ENCODE measurements at regions of chr19 and their contacts with region 1.

Region 1: DNA sequence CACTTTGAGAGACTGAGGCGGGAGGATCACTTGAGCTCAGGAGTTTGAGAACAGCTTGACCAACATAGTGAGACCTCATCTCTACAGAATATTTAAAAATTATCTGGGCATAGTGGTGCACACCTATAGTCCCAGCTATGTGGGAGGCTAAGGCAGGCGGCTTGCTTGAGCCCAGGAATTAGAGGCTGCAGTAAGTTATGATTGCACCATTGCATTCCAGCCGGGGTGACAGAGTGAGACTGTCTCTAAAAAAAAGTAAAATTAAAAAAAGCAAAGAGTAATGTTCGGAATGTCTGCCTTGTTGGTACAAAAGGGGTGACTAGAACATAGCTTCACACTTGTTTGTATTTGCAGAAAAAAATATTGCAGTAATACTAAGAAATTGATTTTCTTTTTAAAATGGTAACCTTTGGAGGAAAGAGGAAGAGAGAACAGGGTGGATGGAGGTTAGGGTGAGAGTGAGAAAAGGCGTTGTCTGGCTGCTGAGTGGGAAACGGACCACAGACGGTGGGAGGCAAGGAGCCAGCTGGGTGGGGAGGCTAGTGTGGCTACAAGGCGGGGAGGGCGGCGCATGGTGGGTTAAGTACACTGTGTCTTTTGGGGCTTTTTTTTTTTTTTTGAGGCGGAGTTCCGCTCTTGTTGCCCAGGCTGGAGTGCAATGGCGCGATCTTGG is 10.2 kb downstream of the PPP1R14A start:
- DNase-seq: no peak
- H3K4me3 ChIP-seq: no peak overlapping the region
- H3K27ac ChIP-seq: no peak overlapping the region
- H3K27me3 ChIP-seq: no peaks in the 10 kb centered on the region
- CTCF ChIP-seq: no peak

Region 2: DNA sequence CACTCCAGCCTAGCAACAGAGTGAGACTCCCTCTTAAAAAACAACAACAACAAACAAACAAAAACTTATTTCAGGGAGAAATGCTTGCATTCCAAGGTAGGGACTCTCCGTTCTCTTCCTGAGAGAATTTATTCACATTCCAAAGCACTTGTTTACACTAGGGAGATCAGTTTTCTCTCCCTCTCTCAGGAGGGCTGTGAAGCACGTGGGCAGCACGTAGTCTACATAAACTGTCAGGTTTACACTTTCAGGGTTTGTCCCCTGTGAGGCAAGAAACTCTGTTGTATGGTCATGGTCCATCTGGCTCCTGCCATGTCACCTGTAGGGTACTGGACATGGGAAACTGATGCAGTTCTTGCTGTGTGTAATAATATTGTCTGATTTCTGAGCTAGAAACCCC is 371.2 kb before region 1 on chr19:
- CTCF ChIA-PET with region 1: no interaction called
- POLR2A ChIA-PET with region 1: no interaction called
- DNase-seq: peak; percentile 20
- H3K4me3 ChIP-seq: no peak overlapping the region
- H3K27ac ChIP-seq: no peak overlapping the region
- H3K27me3 ChIP-seq: no peaks in the 10 kb centered on the region
- CTCF ChIP-seq: no peak

Region 3: GRCh38 chr19:37906869-37907734 is 338.9 kb before region 1 on chr19 and contains the start of gene SIPA1L3:
- CTCF ChIA-PET with region 1: interaction called, 14 read pairs
- POLR2A ChIA-PET with region 1: no interaction called
- DNase-seq: peak; percentile 86
- H3K4me3 ChIP-seq: peak within 1 kb of the TSS; percentile 96
- H3K27ac ChIP-seq: peak within 1 kb of the TSS; percentile 65
- H3K27me3 ChIP-seq: no peaks in the 10 kb centered on the region
- CTCF ChIP-seq: no peak; the same call in 1 of the 2 replicates
- polyA plus RNA-seq, gene SIPA1L3: 4.9 and 9.4 TPM in 2 replicates

Region 4: GRCh38 chr19:38125238-38125637 is 120.7 kb before region 1 on chr19:
- CTCF ChIA-PET with region 1: no interaction called
- POLR2A ChIA-PET with region 1: no interaction called
- DNase-seq: no peak
- H3K4me3 ChIP-seq: no peak overlapping the region
- H3K27ac ChIP-seq: no peak overlapping the region
- H3K27me3 ChIP-seq: no peaks in the 10 kb centered on the region
- CTCF ChIP-seq: no peak

Region 5: DNA sequence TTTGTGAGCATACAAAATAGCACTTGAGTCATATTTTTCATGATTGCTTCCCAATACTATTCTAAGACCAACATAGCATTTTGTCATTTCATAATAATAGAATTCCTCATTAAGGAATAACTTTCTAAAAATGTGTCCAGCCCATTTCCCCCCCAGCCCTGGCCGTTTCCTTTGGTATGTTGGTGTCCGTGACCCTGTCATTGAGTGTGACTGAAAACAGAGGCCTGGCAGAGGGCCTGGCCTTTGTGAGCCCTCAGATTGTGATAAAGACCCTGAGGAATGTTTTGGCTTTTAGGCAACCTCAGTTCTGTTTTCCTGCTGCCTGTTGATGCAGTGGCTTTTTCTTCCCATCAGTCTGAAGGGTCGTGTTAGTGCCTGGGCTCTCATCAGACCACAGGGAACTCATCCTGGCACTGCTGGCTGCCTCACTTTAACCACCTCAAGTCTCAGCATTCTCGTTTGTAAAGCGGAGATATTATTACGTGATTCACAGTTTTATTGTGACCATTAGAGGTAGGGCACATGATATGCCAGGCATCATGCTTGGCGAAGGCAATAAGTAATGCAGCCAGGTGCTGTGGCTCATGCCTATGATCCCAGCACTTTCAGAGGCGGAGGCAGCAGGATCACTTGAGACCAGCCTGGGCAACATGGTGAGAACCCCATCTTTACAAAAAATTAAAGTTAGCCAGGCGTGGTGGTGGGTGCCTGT is 32.2 kb after region 1 on chr19:
- CTCF ChIA-PET with region 1: interaction called, 10 read pairs
- POLR2A ChIA-PET with region 1: no interaction called
- DNase-seq: no peak
- H3K4me3 ChIP-seq: no peak overlapping the region
- H3K27ac ChIP-seq: peak overlapping the region; percentile 39
- H3K27me3 ChIP-seq: no peaks in the 10 kb centered on the region
- CTCF ChIP-seq: no peak

Region 6: DNA sequence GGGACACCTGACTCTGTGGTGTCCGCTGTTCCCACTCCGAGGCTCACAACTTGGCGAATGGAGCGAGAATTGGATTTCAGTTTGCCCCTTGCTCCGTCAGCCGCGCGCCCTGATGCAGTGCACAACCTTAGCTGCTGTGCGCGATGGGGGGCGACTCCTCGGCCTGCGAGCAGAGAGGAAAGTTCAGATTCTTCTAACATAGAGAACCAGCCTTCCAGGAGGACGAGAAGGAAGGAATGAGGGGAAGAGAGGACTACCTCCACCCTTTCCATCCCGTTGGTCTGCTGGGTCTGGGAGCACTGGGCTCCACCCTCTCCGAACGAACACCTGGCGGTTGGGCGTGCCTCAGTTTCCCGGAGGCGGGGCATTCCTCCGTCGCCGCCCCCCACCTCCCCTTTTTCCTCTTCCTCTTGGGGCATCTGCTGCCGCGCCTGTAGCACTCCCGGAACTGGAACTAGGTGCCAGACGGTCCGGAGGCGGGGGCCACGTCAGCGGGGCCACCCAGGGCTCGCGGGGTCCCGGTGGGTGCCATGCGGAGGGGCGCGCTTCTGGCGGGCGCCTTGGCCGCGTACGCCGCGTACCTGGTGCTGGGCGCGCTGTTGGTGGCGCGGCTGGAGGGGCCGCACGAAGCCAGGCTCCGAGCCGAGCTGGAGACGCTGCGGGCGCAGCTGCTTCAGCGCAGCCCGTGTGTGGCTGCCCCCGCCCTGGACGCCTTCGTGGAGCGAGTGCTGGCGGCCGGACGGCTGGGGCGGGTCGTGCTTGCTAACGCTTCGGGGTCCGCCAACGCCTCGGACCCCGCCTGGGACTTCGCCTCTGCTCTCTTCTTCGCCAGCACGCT is 73.7 kb after region 1 on chr19 and contains the start of gene KCNK6:
- CTCF ChIA-PET with region 1: interaction called, 17 read pairs
- POLR2A ChIA-PET with region 1: no interaction called
- DNase-seq: no peak
- H3K4me3 ChIP-seq: peak within 1 kb of the TSS; percentile 68
- H3K27ac ChIP-seq: no peak within 1 kb of the TSS
- H3K27me3 ChIP-seq: no peaks in the 10 kb centered on the region
- CTCF ChIP-seq: no peak
- polyA plus RNA-seq, gene KCNK6: 2.6 and 2.8 TPM in 2 replicates

Region 7: GRCh38 chr19:38367770-38368169 is 121.8 kb after region 1 on chr19:
- CTCF ChIA-PET with region 1: no interaction called
- POLR2A ChIA-PET with region 1: no interaction called
- DNase-seq: no peak
- H3K4me3 ChIP-seq: no peak overlapping the region
- H3K27ac ChIP-seq: no peak overlapping the region
- H3K27me3 ChIP-seq: peaks cover 16% of the 10 kb centered on the region
- CTCF ChIP-seq: no peak

Region 8: GRCh38 chr19:38387550-38388348 is 141.8 kb after region 1 on chr19 and contains the start of gene GGN:
- CTCF ChIA-PET with region 1: interaction called, 13 read pairs
- POLR2A ChIA-PET with region 1: interaction called, 3 read pairs
- DNase-seq: peak; percentile 87
- H3K4me3 ChIP-seq: peak within 1 kb of the TSS; percentile 93
- H3K27ac ChIP-seq: peak within 1 kb of the TSS; percentile 77
- H3K27me3 ChIP-seq: no peaks in the 10 kb centered on the region
- CTCF ChIP-seq: no peak
- polyA plus RNA-seq, gene GGN: 0.15 and 0.27 TPM in 2 replicates

Region 9: GRCh38 chr19:38409631-38410133 is 163.7 kb after region 1 on chr19:
- CTCF ChIA-PET with region 1: no interaction called
- POLR2A ChIA-PET with region 1: no interaction called
- DNase-seq: no peak
- H3K4me3 ChIP-seq: no peak overlapping the region
- H3K27ac ChIP-seq: no peak overlapping the region
- H3K27me3 ChIP-seq: no peaks in the 10 kb centered on the region
- CTCF ChIP-seq: no peak